MCF 10A (cell line): ENCODE measurements at regions of chrX and their contacts with region 1.

Region 1: GRCh38 chrX:50691820-50692219 is 122.2 kb downstream of the SHROOM4 start:
- DNase-seq: peak; percentile 65
- H3K4me3 Mint-ChIP-seq: no peak overlapping the region
- H3K27ac Mint-ChIP-seq: no peak overlapping the region
- H3K4me1 Mint-ChIP-seq: no peaks in the 10 kb centered on the region
- H3K27me3 Mint-ChIP-seq: peaks cover 54% of the 10 kb centered on the region
- CTCF ChIP-seq: peak; percentile 70

Region 2: DNA sequence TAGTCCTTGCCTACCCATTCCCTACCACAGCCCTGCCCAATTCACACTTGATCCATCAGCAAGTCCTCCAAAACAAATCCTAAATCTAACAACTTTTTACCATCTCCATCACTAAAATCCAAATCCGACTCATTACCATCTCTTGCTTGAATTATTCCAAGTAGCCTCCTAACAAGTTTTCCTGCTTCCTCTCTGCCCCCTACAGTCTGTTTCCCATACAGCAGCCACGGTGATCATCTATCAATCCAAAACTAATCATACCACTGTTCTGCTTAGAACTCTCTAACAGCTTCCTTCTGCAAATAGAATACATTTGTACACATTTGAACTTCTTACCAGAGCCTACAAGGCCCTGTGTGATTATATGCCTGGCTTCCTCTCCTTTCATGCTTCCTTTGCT is 10.8 kb before region 1 on chrX:
- CTCF ChIA-PET with region 1: interaction called, 33 read pairs
- POLR2A ChIA-PET with region 1: no interaction called
- intact Hi-C with region 1: no loop called
- DNase-seq: peak; percentile 5
- H3K4me3 Mint-ChIP-seq: no peak overlapping the region
- H3K27ac Mint-ChIP-seq: no peak overlapping the region
- H3K4me1 Mint-ChIP-seq: no peaks in the 10 kb centered on the region
- H3K27me3 Mint-ChIP-seq: peaks cover 5% of the 10 kb centered on the region
- CTCF ChIP-seq: peak; percentile 24

Region 3: DNA sequence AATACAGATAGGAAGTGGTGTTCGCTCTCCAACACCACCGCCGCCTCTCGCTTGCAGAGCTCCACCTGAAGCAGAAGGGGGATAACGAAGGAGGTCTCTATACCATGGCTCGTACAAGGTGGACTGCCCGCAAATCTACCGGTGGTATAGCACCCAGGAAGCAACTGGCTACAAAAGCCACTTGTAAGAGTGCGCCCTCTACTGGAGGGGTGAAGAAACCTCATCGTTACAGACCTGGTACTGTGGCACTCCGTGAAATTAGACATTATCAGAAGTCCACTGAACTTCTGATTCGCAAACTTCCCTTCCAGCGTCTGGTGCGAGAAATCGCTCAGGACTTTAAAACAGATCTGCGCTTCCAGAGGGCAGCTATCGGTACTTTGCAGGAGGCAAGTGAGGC is 213.5 kb after region 1 on chrX:
- CTCF ChIA-PET with region 1: interaction called, 12 read pairs
- POLR2A ChIA-PET with region 1: no interaction called
- intact Hi-C with region 1: loop called (anchors 1 kb)
- DNase-seq: peak; percentile 34
- H3K4me3 Mint-ChIP-seq: no peak overlapping the region
- H3K27ac Mint-ChIP-seq: no peak overlapping the region
- H3K4me1 Mint-ChIP-seq: no peaks in the 10 kb centered on the region
- H3K27me3 Mint-ChIP-seq: peaks cover 13% of the 10 kb centered on the region
- CTCF ChIP-seq: peak; percentile 65

Region 4: DNA sequence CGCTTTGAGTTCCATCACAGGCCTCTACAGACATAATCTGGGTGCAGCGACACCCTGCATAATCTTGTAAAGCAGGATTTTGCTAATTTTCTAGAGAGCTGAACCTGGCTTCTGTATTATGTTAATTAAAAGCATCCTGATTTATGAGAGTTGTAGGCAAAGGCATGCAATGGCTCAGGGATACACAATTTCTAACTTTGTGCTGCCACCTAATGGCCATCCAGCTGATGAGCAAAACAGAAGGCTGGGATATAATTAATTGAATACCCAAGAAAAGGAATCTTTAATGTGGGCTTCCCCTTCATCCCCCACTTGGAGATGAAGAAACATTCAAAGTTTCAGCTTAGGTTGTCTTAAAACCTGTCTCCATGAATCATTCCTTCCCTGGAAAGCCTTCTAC is 296.8 kb after region 1 on chrX:
- CTCF ChIA-PET with region 1: interaction called, 25 read pairs
- POLR2A ChIA-PET with region 1: no interaction called
- intact Hi-C with region 1: loop called (anchors 2 kb)
- DNase-seq: peak; percentile 62
- H3K4me3 Mint-ChIP-seq: no peak overlapping the region
- H3K27ac Mint-ChIP-seq: no peak overlapping the region
- H3K4me1 Mint-ChIP-seq: no peaks in the 10 kb centered on the region
- H3K27me3 Mint-ChIP-seq: peaks cover 61% of the 10 kb centered on the region
- CTCF ChIP-seq: peak; percentile 56